Caco-2 (cell line): ENCODE measurements at regions of chr5 and their contacts with region 1.

Region 1: GRCh38 chr5:69454460-69455249 is 37.9 kb upstream of the OCLN start:
- DNase-seq: peak; percentile 80 to 86
- H3K4me3 ChIP-seq: peak overlapping the region; percentile 9
- H3K4me3 Mint-ChIP-seq: peak overlapping the region; percentile 69
- H3K27ac Mint-ChIP-seq: peak overlapping the region; percentile 76
- H3K4me1 ChIP-seq: peaks cover 47% of the 10 kb centered on the region
- H3K4me1 Mint-ChIP-seq: peaks cover 20% of the 10 kb centered on the region
- H3K27me3 ChIP-seq: no peaks in the 10 kb centered on the region
- H3K27me3 Mint-ChIP-seq: no peaks in the 10 kb centered on the region
- CTCF ChIP-seq: no peak

Region 2: DNA sequence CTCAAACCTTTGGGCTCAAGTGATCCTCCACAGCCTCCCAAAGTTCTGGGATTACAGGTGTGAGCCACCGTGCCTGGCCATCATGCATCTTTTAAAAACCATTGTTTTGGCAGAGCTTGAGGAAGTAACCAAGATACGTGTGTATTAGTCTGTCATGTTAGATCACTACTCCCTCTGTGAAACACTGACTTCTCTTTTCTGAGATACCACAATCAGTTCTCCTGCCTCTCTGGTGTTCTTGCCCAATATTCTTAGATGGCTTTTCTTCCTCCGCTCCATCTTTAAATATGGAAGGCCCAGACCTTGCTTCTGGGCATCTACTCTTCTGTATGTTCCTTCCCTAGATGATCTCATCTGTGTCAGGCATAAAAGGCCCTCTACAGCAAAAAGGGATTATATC is 301.9 kb before region 1 on chr5:
- CTCF ChIA-PET with region 1: no interaction called
- POLR2A ChIA-PET with region 1: no interaction called
- intact Hi-C with region 1: no loop called
- DNase-seq: no peak
- H3K4me3 ChIP-seq: no peak overlapping the region
- H3K4me3 Mint-ChIP-seq: no peak overlapping the region
- H3K27ac Mint-ChIP-seq: no peak overlapping the region
- H3K4me1 ChIP-seq: no peaks in the 10 kb centered on the region
- H3K4me1 Mint-ChIP-seq: no peaks in the 10 kb centered on the region
- H3K27me3 ChIP-seq: no peaks in the 10 kb centered on the region
- H3K27me3 Mint-ChIP-seq: no peaks in the 10 kb centered on the region
- CTCF ChIP-seq: no peak

Region 3: GRCh38 chr5:69492391-69492922 is 37.8 kb after region 1 on chr5 and contains the start of gene OCLN:
- CTCF ChIA-PET with region 1: interaction called, 3 read pairs
- POLR2A ChIA-PET with region 1: interaction called, 13 read pairs
- intact Hi-C with region 1: loop called (anchors 1 kb)
- DNase-seq: peak; percentile 96
- H3K4me3 ChIP-seq: peak within 1 kb of the TSS; percentile 99
- H3K4me3 Mint-ChIP-seq: peak within 1 kb of the TSS; percentile 100
- H3K27ac Mint-ChIP-seq: peak within 1 kb of the TSS; percentile 100
- H3K4me1 ChIP-seq: peaks cover 34% of the 10 kb centered on the region
- H3K4me1 Mint-ChIP-seq: peaks cover 43% of the 10 kb centered on the region
- H3K27me3 ChIP-seq: no peaks in the 10 kb centered on the region
- H3K27me3 Mint-ChIP-seq: no peaks in the 10 kb centered on the region
- CTCF ChIP-seq: peak in 1 of 2 experiments; percentile 2
- total RNA-seq, gene OCLN: 174 and 184 TPM in 2 replicates